ENCODE measurements at regions of chr1 and their contacts with region 1.

Region 1: DNA sequence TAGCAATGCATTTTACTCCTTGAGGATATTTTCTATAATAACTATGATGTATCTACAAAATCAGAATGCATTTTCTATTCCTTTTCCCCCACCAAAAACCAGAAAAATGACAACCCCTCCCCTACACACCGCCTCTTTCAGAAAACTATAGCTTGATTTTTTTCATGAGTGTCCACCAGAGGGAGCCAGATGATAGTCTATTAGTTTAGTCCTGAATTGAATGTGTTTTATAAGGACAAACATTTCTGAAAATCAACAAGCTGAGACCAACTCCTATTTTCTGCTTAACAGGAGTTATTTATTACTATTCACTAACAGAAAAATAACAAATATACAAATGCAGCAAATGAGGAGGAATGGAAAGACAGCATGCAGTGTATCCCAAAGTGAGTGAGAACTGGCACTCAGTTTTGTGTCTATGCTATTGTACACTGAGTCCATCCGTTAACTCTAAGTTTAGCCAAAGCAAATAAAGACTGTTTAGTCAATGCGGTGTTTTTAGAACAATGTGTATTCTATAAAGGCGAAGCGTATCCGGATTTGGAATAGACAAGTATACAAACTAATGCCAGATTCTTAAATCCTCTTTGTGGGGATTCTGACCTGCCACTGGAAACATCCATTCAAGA is 182.6 kb downstream of the VAV3 start:
- DNase-seq: no peak
- H3K4me3 Mint-ChIP-seq: no peak overlapping the region
- H3K27ac Mint-ChIP-seq: no peak overlapping the region
- H3K4me1 Mint-ChIP-seq: peaks cover 24% of the 10 kb centered on the region
- H3K27me3 Mint-ChIP-seq: no peaks in the 10 kb centered on the region

Region 2: GRCh38 chr1:107378527-107379270 is 403.6 kb before region 1 on chr1:
- CTCF ChIA-PET with region 1: no interaction called
- POLR2A ChIA-PET with region 1: no interaction called
- intact Hi-C with region 1: no loop called
- DNase-seq: no peak
- H3K4me3 Mint-ChIP-seq: no peak overlapping the region
- H3K27ac Mint-ChIP-seq: no peak overlapping the region
- H3K4me1 Mint-ChIP-seq: no peaks in the 10 kb centered on the region
- H3K27me3 Mint-ChIP-seq: peaks cover 2% of the 10 kb centered on the region

Region 3: DNA sequence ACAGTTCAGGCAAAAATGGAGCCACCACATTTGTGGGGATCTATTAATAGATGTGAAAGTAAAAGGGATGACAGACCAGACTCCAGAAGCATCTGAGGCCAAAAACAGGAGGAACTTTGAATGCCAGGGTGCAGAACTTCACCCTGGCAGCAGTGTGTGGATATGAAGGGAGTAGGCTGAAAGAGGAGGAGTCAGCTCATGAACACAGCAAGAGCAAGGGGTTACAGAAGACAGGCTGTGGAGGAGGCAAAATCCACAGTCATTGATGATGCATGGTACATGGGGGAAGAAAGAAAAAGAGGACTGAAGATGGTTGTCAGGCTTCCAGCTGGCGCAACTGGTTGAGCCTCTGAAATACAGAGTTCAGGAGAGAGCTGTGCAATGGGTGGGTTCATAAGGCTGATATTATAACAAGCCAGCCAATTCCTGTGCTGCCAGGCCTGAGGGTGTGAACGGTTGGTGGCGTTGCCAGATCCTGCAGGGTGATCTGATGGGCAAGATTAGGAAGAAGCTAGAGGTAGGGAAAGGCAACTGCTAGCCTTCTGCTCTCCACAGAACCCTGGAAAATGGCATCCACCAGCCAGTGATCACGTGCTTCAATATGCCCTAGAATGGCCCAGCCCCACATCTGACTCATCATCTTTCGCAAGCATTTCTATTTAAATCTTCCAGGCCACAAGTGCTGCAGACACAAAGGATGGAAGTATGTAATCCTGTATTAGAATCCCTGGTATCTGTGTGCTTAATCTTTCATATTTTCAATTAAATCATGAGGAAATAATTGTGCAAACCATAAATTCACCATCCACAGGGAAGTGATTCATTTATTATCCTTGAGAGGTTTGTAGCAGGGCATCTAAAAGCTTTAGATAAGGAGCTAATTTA is 335.9 kb after region 1 on chr1:
- CTCF ChIA-PET with region 1: interaction called, 423 read pairs
- POLR2A ChIA-PET with region 1: no interaction called
- intact Hi-C with region 1: no loop called
- DNase-seq: peak; percentile 15
- H3K4me3 Mint-ChIP-seq: no peak overlapping the region
- H3K27ac Mint-ChIP-seq: no peak overlapping the region
- H3K4me1 Mint-ChIP-seq: peaks cover 4% of the 10 kb centered on the region
- H3K27me3 Mint-ChIP-seq: peaks cover 5% of the 10 kb centered on the region

Region 4: GRCh38 chr1:108199781-108200570 is 417.6 kb after region 1 on chr1 and contains the start of gene SLC25A24:
- CTCF ChIA-PET with region 1: no interaction called
- POLR2A ChIA-PET with region 1: no interaction called
- intact Hi-C with region 1: loop called (anchors 5 kb)
- DNase-seq: peak; percentile 83
- H3K4me3 Mint-ChIP-seq: peak within 1 kb of the TSS; percentile 85
- H3K27ac Mint-ChIP-seq: peak within 1 kb of the TSS; percentile 61
- H3K4me1 Mint-ChIP-seq: peaks cover 29% of the 10 kb centered on the region
- H3K27me3 Mint-ChIP-seq: no peaks in the 10 kb centered on the region
- total RNA-seq, gene SLC25A24: 18.1 to 19.4 TPM

Measured in activated CD4-positive, alpha-beta memory T cell treated with anti-CD3 and anti-CD28 coated beads for 36 hours (primary cell).